Activated CD8-positive, alpha-beta T cell treated with anti-CD3 and anti-CD28 coated beads, Interleukin-2, amount 10 ng/mL, durations not matched to agents 7 days and 5 days (primary cell): ENCODE measurements at regions of chr10 and their contacts with region 1.

Region 1: DNA sequence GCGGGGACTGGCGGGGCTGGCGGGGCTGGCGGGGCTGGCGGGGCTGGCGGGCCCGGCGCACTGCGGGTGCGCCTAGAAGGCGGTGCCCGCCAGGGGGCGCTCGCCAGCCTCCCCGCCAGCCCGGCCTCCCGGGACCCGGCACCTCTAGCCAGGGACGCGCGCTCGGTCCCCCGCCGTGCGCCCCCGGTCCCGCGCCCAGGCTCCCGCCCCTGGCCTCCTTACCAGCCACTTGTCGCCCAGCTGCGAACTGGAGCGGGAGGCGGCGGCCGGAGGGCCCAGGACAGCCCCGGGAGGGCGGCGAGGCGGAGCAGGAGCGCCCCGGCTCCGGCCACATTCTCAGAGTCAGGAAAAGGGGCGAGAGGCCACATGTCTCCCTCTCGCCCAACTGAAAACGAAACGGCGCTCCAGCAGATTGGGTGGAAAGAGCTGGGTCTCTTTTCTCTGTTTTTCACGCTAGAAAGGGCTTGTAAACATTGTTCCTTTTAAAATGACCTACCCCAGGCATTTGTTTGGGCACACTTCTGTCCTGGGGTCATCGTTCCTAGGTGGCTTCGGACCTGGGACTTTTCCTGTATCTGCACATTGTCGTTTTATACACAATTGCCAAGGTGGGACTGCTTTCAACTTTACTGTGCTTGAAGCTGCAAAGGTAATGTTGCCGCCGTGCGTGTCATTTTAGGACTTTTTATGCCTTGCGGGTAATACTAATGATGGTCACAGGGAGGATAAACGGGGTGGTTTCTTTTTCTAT is 378 bp upstream of the PRKCQ start:
- DNase-seq: peak; percentile 88
- ATAC-seq: peak; percentile 65
- H3K4me3 Mint-ChIP-seq: peak overlapping the region; percentile 93
- H3K27ac Mint-ChIP-seq: peak overlapping the region; percentile 97
- H3K4me1 Mint-ChIP-seq: peaks cover 41% of the 10 kb centered on the region
- H3K27me3 Mint-ChIP-seq: no peaks in the 10 kb centered on the region

Region 2: GRCh38 chr10:6445501-6446316 is 134.7 kb before region 1 on chr10:
- CTCF ChIA-PET with region 1: interaction called, 17 read pairs
- POLR2A ChIA-PET with region 1: interaction called, 4 read pairs
- DNase-seq: peak; percentile 80
- ATAC-seq: peak; percentile 67
- H3K4me3 Mint-ChIP-seq: no peak overlapping the region
- H3K27ac Mint-ChIP-seq: peak overlapping the region; percentile 0
- H3K4me1 Mint-ChIP-seq: peaks cover 39% of the 10 kb centered on the region
- H3K27me3 Mint-ChIP-seq: no peaks in the 10 kb centered on the region

Region 3: DNA sequence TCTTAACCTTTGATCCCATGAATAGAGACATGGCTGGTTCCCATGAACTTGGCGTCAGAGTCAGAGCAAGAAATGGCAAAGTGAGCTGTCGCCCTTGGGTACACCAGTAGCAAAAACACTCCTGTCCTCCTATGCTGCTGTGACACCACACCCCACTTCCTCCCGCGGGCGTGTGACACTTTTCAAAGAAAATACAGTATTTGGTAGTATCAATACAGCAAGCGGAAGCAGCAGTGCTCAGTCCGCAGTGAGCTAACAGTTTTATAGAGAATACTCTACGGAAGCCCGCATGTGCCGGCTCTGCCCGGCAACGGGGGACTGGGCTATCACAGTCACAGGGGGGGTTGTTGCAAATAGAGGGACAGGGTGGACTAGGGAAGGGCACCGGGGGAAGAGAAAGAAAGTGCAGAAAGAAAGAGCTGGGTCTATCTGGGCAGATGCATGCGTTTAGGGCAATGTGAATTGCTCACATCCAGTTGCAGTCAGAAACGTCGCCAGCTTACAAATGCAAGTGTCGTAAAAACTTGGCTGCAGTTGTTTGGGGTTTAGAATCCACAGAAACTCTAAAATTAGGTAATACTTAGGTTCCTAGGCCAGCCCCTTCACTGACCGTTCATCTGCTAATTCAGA is 50.1 kb before region 1 on chr10:
- CTCF ChIA-PET with region 1: interaction called, 17 read pairs
- POLR2A ChIA-PET with region 1: interaction called, 49 read pairs
- DNase-seq: peak; percentile 93
- ATAC-seq: peak; percentile 98
- H3K4me3 Mint-ChIP-seq: peak overlapping the region; percentile 77
- H3K27ac Mint-ChIP-seq: peak overlapping the region; percentile 98
- H3K4me1 Mint-ChIP-seq: peaks cover 85% of the 10 kb centered on the region
- H3K27me3 Mint-ChIP-seq: no peaks in the 10 kb centered on the region

Region 4: GRCh38 chr10:6563075-6563474 is 17.4 kb before region 1 on chr10:
- CTCF ChIA-PET with region 1: interaction called, 32 read pairs
- POLR2A ChIA-PET with region 1: interaction called, 30 read pairs
- DNase-seq: peak; percentile 67
- ATAC-seq: peak; percentile 82
- H3K4me3 Mint-ChIP-seq: peak overlapping the region; percentile 75
- H3K27ac Mint-ChIP-seq: peak overlapping the region; percentile 92
- H3K4me1 Mint-ChIP-seq: peaks cover 89% of the 10 kb centered on the region
- H3K27me3 Mint-ChIP-seq: no peaks in the 10 kb centered on the region

Region 5: DNA sequence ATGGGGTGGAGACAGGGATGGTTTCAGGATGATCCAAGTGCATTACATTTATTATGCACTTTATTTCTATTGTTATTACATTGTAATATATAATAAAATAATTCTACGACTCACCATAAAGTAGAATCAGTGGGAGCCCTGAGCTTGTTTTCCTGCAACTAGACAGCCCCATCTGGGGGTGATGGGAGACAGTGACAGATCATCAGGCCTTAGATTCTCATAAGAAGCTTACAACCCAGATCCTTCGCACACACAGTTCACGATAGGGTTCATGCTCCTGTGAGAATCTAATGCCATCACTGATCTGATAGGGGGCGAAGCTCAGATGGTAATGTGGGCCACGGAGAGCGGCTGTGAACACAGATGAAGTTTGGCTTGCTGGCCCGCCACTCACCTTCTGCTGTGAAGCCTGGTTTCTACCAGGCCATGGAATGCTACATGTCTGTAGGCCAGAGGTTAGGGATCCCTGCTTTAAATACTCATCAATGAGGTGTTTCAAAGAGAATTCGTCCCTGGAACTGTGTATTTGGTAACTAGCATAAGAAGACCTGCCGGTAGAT is 20.9 kb after region 1 on chr10:
- CTCF ChIA-PET with region 1: interaction called, 131 read pairs
- POLR2A ChIA-PET with region 1: interaction called, 239 read pairs
- DNase-seq: peak; percentile 47
- ATAC-seq: peak; percentile 31
- H3K4me3 Mint-ChIP-seq: peak overlapping the region; percentile 20
- H3K27ac Mint-ChIP-seq: peak overlapping the region; percentile 88
- H3K4me1 Mint-ChIP-seq: peaks cover 80% of the 10 kb centered on the region
- H3K27me3 Mint-ChIP-seq: no peaks in the 10 kb centered on the region

Region 6: GRCh38 chr10:6642876-6643275 is 62.4 kb after region 1 on chr10:
- CTCF ChIA-PET with region 1: interaction called, 39 read pairs
- POLR2A ChIA-PET with region 1: interaction called, 21 read pairs
- DNase-seq: peak; percentile 36
- ATAC-seq: peak; percentile 45
- H3K4me3 Mint-ChIP-seq: no peak overlapping the region
- H3K27ac Mint-ChIP-seq: peak overlapping the region; percentile 64
- H3K4me1 Mint-ChIP-seq: peaks cover 44% of the 10 kb centered on the region
- H3K27me3 Mint-ChIP-seq: no peaks in the 10 kb centered on the region

Region 7: GRCh38 chr10:6667679-6668270 is 87.3 kb after region 1 on chr10:
- CTCF ChIA-PET with region 1: interaction called, 62 read pairs
- POLR2A ChIA-PET with region 1: interaction called, 14 read pairs
- DNase-seq: peak; percentile 70
- ATAC-seq: no peak
- H3K4me3 Mint-ChIP-seq: no peak overlapping the region
- H3K27ac Mint-ChIP-seq: no peak overlapping the region
- H3K4me1 Mint-ChIP-seq: peaks cover 32% of the 10 kb centered on the region
- H3K27me3 Mint-ChIP-seq: peaks cover 5% of the 10 kb centered on the region

Region 8: DNA sequence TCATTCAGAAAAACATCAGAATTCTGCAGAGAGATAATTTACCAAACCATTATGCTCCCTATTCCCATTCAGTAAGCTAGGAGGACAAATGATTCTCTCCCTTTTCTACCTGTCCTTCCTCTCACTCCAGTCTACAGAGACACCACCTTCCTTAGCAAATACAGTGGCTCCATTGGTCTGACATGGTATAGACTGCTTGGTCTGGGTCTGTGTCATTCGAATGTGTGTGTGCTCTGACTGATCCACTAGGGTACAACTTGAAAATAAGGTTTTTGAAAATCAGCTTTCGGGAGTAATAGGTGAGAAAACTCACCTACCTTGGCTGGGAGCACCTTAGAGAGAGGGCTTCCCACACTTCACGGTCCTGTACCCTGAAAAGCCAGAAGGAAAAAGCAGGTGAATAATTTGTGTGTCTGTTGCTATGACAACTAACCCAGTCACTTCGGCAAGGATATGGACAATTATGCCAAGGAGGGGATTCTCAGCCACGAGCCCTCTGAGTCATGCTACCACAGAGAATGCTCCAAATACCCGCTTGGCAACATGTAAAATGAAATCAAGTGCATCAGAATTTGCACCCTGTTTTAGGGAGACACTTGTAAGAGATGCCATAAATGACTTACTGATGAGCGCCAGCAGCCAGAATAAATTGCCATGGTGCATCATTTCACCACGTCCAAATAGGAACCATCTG is 114.1 kb after region 1 on chr10:
- CTCF ChIA-PET with region 1: no interaction called
- POLR2A ChIA-PET with region 1: no interaction called
- DNase-seq: no peak
- ATAC-seq: no peak
- H3K4me3 Mint-ChIP-seq: no peak overlapping the region
- H3K27ac Mint-ChIP-seq: no peak overlapping the region
- H3K4me1 Mint-ChIP-seq: no peaks in the 10 kb centered on the region
- H3K27me3 Mint-ChIP-seq: peaks cover 21% of the 10 kb centered on the region

Region 9: GRCh38 chr10:6713716-6714115 is 133.3 kb after region 1 on chr10:
- CTCF ChIA-PET with region 1: no interaction called
- POLR2A ChIA-PET with region 1: no interaction called
- DNase-seq: peak; percentile 59
- ATAC-seq: peak; percentile 63
- H3K4me3 Mint-ChIP-seq: no peak overlapping the region
- H3K27ac Mint-ChIP-seq: no peak overlapping the region
- H3K4me1 Mint-ChIP-seq: peaks cover 9% of the 10 kb centered on the region
- H3K27me3 Mint-ChIP-seq: peaks cover 39% of the 10 kb centered on the region